OCI-LY7 (cell line): ENCODE measurements at regions of chr17 and their contacts with region 1.

Region 1: DNA sequence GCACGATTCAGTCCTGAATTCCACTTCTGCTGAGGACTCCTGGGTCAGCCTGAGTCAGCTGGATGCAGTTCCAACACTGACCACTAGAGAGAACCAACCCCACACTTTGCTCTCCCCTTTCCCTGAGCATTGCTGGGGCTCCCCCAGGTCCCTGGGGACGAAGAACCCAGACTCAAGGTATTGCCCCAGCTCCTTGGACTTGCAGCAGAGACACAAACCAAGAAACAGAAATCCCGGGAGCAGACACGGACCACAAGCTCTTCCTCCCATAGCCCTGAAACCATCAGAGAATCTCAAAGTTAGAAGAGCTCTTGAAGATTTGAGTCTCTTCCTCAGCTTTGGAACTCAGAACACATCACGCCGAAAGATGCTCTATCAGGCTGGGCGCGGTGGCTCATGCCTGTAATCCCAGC is 678 bp upstream of the GH1 start:
- DNase-seq: peak; percentile 88
- H3K4me3 ChIP-seq: peak overlapping the region; percentile 42
- H3K27ac ChIP-seq: peak overlapping the region; percentile 63
- H3K4me1 ChIP-seq: peaks cover 71% of the 10 kb centered on the region
- CTCF ChIP-seq: peak; percentile 92

Region 2: DNA sequence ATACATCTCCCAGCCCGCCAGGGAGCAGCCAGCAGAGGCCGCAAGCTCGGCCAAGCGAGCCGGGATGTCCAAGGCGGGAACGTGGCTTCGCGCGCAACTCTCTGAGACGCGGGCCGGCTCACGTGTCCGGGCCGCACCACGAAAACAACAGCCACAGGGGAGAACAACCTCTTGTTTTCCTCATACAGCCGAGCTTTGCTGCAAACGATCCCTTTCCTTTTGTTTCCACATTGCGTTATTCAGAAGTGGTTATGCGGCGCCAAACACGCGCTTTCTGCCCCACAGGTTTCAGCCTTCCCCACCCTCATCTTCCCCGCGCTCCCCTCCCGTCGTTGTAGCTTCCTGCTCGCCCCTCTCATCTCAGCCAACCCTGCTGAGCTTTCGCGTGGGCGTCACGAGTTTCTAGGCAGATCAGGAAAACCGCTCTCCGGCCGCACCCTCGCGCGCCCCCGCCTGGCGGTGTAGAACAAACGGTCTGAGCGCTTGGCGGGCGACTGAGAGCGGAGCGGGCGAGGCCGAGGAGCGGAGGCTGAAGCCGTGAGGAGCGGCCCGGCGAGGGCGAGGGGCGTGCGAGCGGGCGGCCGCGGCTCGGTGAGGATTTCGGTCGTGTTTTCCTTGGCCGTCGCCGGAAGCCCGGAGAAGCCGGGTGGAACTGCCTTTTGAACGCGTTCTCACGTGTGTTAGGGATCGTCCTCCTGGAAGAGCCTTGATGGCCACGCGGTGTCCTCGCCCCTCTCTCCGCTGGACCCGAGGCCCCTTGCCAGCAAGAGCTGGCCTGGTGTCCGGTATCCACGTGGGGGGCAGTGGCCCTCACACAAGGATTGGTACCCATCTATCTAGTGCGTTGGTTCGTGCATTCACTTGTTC is 70.2 kb before region 1 on chr17:
- CTCF ChIA-PET with region 1: no interaction called
- POLR2A ChIA-PET with region 1: no interaction called
- intact Hi-C with region 1: no loop called
- DNase-seq: peak; percentile 95
- H3K4me3 ChIP-seq: peak overlapping the region; percentile 22
- H3K27ac ChIP-seq: peak overlapping the region; percentile 44
- H3K4me1 ChIP-seq: peaks cover 18% of the 10 kb centered on the region
- CTCF ChIP-seq: peak; percentile 85

Region 3: GRCh38 chr17:63931099-63931561 is 11.8 kb after region 1 on chr17:
- CTCF ChIA-PET with region 1: interaction called, 5 read pairs
- POLR2A ChIA-PET with region 1: interaction called, 18 read pairs
- intact Hi-C with region 1: loop called (anchors 1 kb)
- DNase-seq: peak; percentile 83
- H3K4me3 ChIP-seq: peak overlapping the region; percentile 98
- H3K27ac ChIP-seq: peak overlapping the region; percentile 99
- H3K4me1 ChIP-seq: peaks cover 73% of the 10 kb centered on the region
- CTCF ChIP-seq: no peak

Region 4: DNA sequence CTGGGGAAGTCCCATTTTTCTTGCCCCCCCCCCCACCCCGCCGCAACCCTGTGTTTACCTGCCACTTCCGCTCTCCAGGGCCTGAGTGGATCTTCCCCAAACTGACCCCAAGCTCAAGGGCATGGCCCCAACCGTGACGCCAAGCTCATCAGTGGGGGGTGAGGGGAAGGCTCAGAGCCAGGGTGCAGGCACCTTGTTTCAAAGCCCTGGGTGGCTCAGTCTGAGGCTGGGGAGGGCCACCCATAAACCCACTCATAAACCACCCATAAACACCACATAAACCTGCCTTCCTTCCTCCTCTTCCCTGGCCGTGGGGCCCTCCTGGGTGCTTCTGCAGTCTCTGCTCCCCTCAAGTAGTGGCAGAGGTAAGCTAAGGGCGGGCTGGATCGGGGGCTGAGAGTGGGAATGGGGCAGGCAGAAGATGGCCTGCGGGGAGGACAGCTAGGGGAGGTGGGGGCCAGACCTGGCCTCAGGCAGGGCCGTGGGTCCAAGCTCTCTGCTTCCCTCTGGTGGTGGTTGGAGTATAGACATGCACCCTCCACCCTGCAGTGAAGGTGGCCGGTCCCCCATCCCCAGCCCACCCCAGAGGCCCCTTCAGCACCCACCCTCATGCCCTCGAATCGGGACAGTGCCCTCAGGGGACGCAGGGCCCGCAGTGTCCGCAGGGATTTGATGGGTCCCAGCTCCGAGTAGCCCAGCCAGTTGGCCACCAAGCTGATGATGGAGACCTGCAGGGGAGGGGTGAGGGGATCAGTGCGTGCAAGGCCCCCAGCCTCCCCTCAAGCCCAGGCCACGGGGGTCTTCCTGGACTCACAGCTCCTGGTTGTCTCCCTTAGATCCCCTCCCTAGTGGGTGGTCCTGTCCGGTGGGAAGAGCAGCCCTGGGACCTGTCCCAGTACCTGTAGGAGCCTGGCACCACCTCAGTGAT is 27.4 kb after region 1 on chr17:
- CTCF ChIA-PET with region 1: interaction called, 94 read pairs
- POLR2A ChIA-PET with region 1: interaction called, 52 read pairs
- intact Hi-C with region 1: loop called (anchors 1 kb)
- DNase-seq: peak; percentile 85
- H3K4me3 ChIP-seq: peak overlapping the region; percentile 49
- H3K27ac ChIP-seq: peak overlapping the region; percentile 85
- H3K4me1 ChIP-seq: peaks cover 56% of the 10 kb centered on the region
- CTCF ChIP-seq: peak; percentile 80

Region 5: GRCh38 chr17:63954402-63955063 is 35.2 kb after region 1 on chr17:
- CTCF ChIA-PET with region 1: interaction called, 55 read pairs
- POLR2A ChIA-PET with region 1: interaction called, 21 read pairs
- intact Hi-C with region 1: loop called (anchors 1 kb)
- DNase-seq: peak; percentile 91
- H3K4me3 ChIP-seq: peak overlapping the region; percentile 44
- H3K27ac ChIP-seq: peak overlapping the region; percentile 89
- H3K4me1 ChIP-seq: peaks cover 44% of the 10 kb centered on the region
- CTCF ChIP-seq: peak; percentile 73

Region 6: GRCh38 chr17:64020056-64020766 is 100.9 kb after region 1 on chr17 and contains the start of gene ICAM2:
- CTCF ChIA-PET with region 1: interaction called, 3 read pairs
- POLR2A ChIA-PET with region 1: interaction called, 12 read pairs
- intact Hi-C with region 1: no loop called
- DNase-seq: peak; percentile 91
- H3K4me3 ChIP-seq: peak within 1 kb of the TSS; percentile 79
- H3K27ac ChIP-seq: peak within 1 kb of the TSS; percentile 97
- H3K4me1 ChIP-seq: peaks cover 67% of the 10 kb centered on the region
- CTCF ChIP-seq: no peak
- total RNA-seq, gene ICAM2: 76.4 and 112 TPM in 2 replicates

Region 7: DNA sequence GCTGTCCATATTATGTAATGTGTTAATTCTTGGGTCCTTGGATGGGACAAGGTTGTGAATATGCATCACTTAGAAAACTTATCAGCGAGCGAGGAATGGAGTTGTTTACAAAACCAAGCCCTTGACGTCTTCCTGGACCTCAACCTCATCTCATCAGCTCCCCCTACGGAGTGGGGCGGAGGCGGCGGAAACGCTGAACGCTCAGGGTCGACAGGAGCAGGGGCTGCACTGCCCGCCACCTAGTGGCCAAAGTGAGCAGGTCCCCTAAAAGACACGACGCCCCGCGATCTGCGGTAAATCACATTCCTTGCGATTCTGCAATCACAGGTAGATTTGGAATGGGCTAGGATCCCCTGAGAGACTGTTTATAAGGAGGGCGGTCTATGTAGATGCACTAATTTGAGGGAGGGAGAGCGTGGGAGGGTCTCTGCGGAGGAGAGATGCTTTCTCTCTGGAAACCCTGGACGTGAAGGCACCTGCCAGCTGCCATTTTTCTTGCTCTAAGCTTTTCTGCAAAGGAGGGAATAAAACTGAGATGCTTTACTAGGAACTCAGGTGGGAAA is 106.5 kb after region 1 on chr17:
- CTCF ChIA-PET with region 1: interaction called, 3 read pairs
- POLR2A ChIA-PET with region 1: interaction called, 12 read pairs
- intact Hi-C with region 1: no loop called
- DNase-seq: peak; percentile 91
- H3K4me3 ChIP-seq: peak overlapping the region; percentile 20
- H3K27ac ChIP-seq: peak overlapping the region; percentile 20
- H3K4me1 ChIP-seq: peaks cover 73% of the 10 kb centered on the region
- CTCF ChIP-seq: peak; percentile 98

Region 8: GRCh38 chr17:64073771-64074703 is 154.7 kb after region 1 on chr17:
- CTCF ChIA-PET with region 1: interaction called, 3 read pairs
- POLR2A ChIA-PET with region 1: no interaction called
- intact Hi-C with region 1: loop called (anchors 2 kb)
- DNase-seq: peak; percentile 95
- H3K4me3 ChIP-seq: peak overlapping the region; percentile 40
- H3K27ac ChIP-seq: peak overlapping the region; percentile 93
- H3K4me1 ChIP-seq: peaks cover 69% of the 10 kb centered on the region
- CTCF ChIP-seq: no peak